ENCODE measurements at regions of chr3 and their contacts with region 1.

Region 1: DNA sequence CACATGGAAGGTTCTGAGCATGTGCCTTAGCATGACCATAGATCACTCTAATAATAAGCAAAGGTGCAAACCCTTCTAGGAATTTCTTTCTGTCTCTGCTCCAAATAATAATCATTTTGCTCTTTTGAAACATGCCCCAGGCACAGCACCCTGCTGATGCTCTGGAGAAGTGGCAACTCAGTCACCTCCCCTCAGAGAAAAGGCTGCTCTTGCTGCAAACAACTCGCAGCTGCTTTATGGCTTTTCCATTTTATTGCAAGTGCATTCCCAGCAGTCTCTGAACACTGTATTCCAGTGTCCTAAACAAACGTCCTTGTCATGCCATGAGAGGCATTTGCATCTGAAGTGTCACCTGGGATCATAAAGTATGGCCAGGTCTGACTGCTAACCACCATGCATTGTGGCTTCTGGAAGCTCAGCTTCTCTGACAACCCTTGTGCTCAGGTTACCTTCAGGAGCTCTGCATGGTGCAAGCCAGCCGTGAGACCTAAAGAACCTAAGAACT is 358.1 kb upstream of the TRIM42 start:
- DNase-seq: no peak
- ATAC-seq: no peak
- H3K4me3 ChIP-seq: no peak overlapping the region
- H3K27ac ChIP-seq: no peak overlapping the region
- H3K4me1 ChIP-seq: no peaks in the 10 kb centered on the region
- H3K27me3 ChIP-seq: peaks cover 70% of the 10 kb centered on the region
- CTCF ChIP-seq: no peak
- POLR2A ChIP-seq: no peak
- RAD21 ChIP-seq: no peak

Region 2: DNA sequence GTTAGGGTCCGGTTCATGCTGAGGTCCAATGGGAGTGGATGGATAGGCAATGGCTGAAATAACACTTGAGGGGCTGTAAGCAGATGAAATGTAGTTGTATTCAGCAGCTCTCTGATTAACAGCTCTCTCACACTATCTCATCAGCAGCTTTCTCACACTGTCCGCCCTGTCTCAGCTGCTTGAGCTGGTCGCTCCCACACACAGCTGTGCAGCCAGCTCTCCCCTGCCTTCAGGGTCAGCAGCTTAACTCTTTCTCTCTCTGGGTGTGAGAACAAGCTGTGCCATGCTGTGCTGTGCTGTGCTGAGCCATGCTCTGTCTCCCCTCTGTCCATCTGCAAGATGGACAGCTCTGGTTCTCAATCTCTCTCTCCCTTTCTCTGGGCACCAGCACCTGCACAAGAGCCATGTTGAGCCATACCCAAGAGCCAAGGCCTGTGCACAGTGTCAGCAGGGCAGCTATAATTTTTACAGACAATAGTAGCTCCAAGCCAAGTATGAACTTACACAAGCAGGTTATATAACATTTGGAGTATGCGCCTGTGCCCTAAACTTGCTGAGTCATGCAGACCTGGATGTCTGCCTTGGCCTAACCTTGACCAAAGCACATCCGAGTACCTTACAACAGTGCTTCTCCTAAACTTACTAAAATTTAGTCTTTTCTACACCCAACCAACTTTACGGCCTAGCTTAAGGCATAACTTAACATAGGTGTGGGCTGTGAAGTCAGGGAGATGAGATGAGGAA is 66.8 kb after region 1 on chr3:
- CTCF ChIA-PET with region 1: no interaction called
- POLR2A ChIA-PET with region 1: no interaction called
- RAD21 ChIA-PET with region 1: no interaction called
- intact Hi-C with region 1: loop called (anchors 10 kb)
- DNase-seq: no peak
- ATAC-seq: no peak
- H3K4me3 ChIP-seq: no peak overlapping the region
- H3K27ac ChIP-seq: no peak overlapping the region
- H3K4me1 ChIP-seq: no peaks in the 10 kb centered on the region
- H3K27me3 ChIP-seq: no peaks in the 10 kb centered on the region
- CTCF ChIP-seq: no peak
- POLR2A ChIP-seq: no peak
- RAD21 ChIP-seq: no peak